H1 (cell line): ENCODE measurements at regions of chr1 and their contacts with region 1.

Region 1: DNA sequence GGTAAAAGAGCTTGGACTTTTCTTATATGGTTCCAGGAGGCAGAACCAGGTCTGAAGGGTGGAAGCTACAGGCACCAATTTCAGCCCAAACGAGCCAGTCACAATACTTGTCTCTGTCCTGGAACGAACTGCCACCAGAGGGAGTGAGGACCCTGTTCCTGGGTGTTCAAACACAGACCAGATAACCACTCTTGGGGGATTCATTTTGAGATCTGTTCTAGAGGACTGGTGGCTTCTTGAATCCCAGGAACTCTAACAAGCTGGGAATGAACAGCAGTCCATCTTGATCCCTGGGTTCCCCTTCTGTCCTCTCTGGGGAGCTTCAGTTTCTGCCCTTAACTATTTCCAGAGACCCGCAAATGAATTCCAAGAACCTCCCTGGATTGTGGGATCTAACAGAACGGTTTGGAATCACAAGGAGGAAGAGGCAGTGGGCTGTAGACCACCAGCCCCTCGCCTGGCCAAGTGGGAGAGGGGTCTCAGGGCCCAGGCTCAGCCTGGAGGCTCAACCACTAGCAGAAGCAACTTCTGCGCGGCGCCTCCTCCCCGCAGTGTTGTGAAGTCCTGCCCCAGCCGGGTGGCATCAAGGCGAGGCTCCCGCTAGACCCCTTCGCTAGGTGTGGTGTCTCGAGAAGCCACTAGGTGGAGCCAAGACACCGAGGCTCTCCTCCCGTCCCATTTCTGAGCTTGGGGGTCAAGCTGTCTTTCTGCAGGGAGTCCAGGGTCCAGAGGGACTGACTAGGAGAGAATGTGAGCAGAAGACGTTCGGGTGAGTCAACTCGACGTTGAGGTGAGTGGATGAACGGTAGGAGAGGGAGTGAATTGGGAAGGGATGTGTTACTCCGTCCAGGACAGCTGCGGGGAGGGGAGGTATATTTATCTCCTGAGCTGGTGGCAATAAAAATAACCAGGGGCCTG is 12.1 kb upstream of the NES start:
- DNase-seq: peak in 1 of 2 experiments; percentile 92
- H3K4me3 ChIP-seq: peak overlapping the region in 3 of 4 experiments; percentile 36 to 55 (median 52); a peak in 6 of 8 replicates
- H3K27ac ChIP-seq: no peak overlapping the region
- H3K4me1 ChIP-seq: peaks cover 20 to 47% (median 36%) of the 10 kb centered on the region in 4 experiments
- H3K27me3 ChIP-seq: peaks cover 0 to 7% (median 0%) of the 10 kb centered on the region in 4 experiments; a peak in 2 of 7 replicates
- CTCF ChIP-seq: peak; percentile 91 to 98 (median 97)
- EP300 ChIP-seq: no peak; a peak in 1 of 3 replicates
- POLR2A ChIP-seq: no peak
- RAD21 ChIP-seq: peak; percentile 99 to 100

Region 2: DNA sequence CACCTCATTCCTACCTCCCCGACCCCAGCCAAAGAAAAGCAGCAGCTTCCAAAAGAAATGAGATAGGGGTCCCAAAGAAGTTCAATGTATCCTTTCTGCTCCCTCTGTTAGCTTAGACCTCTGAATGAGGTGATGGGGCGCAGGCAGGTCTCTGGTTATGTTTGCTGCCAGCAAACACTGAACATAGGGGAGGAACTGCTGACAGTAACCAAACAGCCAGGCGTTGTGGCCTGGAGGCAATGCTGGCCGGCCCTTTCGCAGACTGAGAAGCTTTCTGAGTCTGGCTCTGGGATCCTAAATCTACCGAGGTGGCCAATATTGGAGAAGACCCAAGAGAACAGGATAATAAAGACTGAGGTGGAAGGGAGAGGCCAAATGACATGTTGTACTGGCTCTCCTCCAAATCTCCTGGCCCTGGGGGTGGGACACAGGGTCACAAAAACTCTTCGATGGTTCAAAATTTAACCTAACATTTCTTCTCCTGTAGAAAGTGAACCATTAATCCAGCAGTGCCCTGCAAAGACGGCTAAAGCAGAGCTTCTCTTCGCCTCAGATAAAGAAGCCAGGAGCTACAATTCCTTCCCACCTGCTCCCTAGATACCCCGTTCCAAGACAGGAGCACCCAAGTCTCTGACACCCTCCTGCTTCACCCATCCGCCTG is 688.1 kb before region 1 on chr1:
- CTCF ChIA-PET with region 1: no interaction called
- POLR2A ChIA-PET with region 1: no interaction called
- DNase-seq: no peak
- H3K4me3 ChIP-seq: no peak overlapping the region
- H3K27ac ChIP-seq: no peak overlapping the region
- H3K4me1 ChIP-seq: peaks cover 0 to 4% (median 0%) of the 10 kb centered on the region in 4 experiments; a peak in 2 of 7 replicates
- H3K27me3 ChIP-seq: no peaks in the 10 kb centered on the region
- CTCF ChIP-seq: no peak
- EP300 ChIP-seq: no peak
- POLR2A ChIP-seq: no peak
- RAD21 ChIP-seq: no peak

Region 3: GRCh38 chr1:156540791-156541383 is 148.4 kb before region 1 on chr1:
- CTCF ChIA-PET with region 1: no interaction called
- POLR2A ChIA-PET with region 1: no interaction called
- DNase-seq: no peak
- H3K4me3 ChIP-seq: no peak overlapping the region
- H3K27ac ChIP-seq: no peak overlapping the region
- H3K4me1 ChIP-seq: no peaks in the 10 kb centered on the region
- H3K27me3 ChIP-seq: no peaks in the 10 kb centered on the region
- CTCF ChIP-seq: no peak
- EP300 ChIP-seq: no peak
- POLR2A ChIP-seq: no peak
- RAD21 ChIP-seq: no peak

Region 4: GRCh38 chr1:156601122-156601830 is 88.0 kb before region 1 on chr1 and contains the start of gene GPATCH4:
- CTCF ChIA-PET with region 1: no interaction called
- POLR2A ChIA-PET with region 1: no interaction called
- DNase-seq: peak in 1 of 2 experiments; percentile 86
- H3K4me3 ChIP-seq: peak within 1 kb of the TSS; percentile 86 to 97 (median 91)
- H3K27ac ChIP-seq: peak within 1 kb of the TSS; percentile 73
- H3K4me1 ChIP-seq: peaks cover 0 to 8% (median 3%) of the 10 kb centered on the region in 4 experiments; a peak in 5 of 7 replicates
- H3K27me3 ChIP-seq: no peaks in the 10 kb centered on the region
- CTCF ChIP-seq: no peak
- EP300 ChIP-seq: no peak
- POLR2A ChIP-seq: peak; percentile 66 to 80; a peak in 2 of 3 replicates
- RAD21 ChIP-seq: no peak
- total RNA-seq, gene GPATCH4: 47.9 and 48.5 TPM in 2 replicates

Region 5: GRCh38 chr1:156625436-156626078 is 63.7 kb before region 1 on chr1:
- CTCF ChIA-PET with region 1: interaction called, 868 read pairs
- POLR2A ChIA-PET with region 1: interaction called, 6 read pairs
- DNase-seq: peak in 1 of 2 experiments; percentile 84
- H3K4me3 ChIP-seq: peak overlapping the region; percentile 44 to 71 (median 46)
- H3K27ac ChIP-seq: no peak overlapping the region
- H3K4me1 ChIP-seq: peaks cover 0 to 9% (median 2%) of the 10 kb centered on the region in 4 experiments; a peak in 5 of 7 replicates
- H3K27me3 ChIP-seq: peaks cover 31 to 50% (median 38%) of the 10 kb centered on the region in 4 experiments
- CTCF ChIP-seq: peak; percentile 69 to 84 (median 75)
- EP300 ChIP-seq: no peak
- POLR2A ChIP-seq: no peak
- RAD21 ChIP-seq: peak; percentile 77 to 81

Region 6: DNA sequence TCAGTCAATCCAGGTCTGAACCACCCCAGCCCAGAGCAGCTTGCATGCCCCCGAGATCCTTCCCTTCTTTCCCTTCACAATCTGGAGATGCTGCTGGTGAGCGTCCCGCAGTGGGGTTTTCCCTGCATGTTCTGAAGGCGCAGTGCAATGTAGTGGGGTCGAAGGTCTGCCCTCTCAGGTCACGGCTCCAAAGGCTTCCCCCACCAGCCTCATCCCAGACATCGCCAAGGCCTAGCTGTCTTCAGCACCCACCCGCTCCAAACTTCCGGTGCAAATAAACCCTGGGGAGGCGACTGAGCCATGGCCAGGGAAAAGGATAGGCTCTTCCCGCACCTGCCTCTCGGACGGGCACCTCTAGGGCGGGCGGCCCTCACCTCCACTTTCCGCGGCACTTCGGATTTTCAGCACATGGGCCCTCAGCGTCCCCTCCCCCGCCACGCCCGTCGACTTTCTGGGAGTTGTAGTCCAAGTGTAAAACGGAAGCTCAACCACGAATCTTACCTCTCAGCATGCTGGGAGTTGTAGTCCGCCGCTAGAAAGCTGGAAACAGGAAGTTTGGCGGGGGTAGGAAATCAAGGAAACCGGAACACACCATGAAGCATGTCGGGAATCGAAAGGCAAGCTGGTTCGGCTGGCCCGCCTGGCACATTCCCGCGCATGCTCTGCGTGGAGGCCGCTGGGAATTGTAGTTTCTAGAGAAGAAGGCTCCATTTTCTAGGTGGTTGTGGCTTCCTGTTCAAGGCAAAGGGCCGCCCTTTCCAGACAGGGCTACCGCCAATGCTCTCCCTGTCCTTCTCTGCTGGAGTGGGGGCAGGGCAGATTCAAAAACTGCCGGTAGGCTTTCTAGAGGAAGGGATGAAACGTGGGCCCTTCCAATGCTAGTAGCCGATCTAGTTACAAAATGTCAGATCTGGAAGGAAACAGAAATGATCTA is 51.7 kb after region 1 on chr1 and contains the start of gene MRPL24:
- CTCF ChIA-PET with region 1: interaction called, 4,284 read pairs
- POLR2A ChIA-PET with region 1: interaction called, 10 read pairs
- DNase-seq: peak; percentile 93 to 99
- H3K4me3 ChIP-seq: peak within 1 kb of the TSS; percentile 55 to 95 (median 84)
- H3K27ac ChIP-seq: peak within 1 kb of the TSS; percentile 72
- H3K4me1 ChIP-seq: peaks cover 3 to 16% (median 7%) of the 10 kb centered on the region in 4 experiments; a peak in 6 of 7 replicates
- H3K27me3 ChIP-seq: no peaks in the 10 kb centered on the region
- CTCF ChIP-seq: peak in 1 of 3 experiments; percentile 12; a peak in 1 of 4 replicates
- EP300 ChIP-seq: no peak
- POLR2A ChIP-seq: peak; percentile 58 to 88
- RAD21 ChIP-seq: 0 out of 4 replicates have a peak, but pooled peaks of 1 of the 2 experiments have one; percentile 19
- total RNA-seq, gene MRPL24: 34.4 and 35.2 TPM in 2 replicates

Region 7: GRCh38 chr1:156767101-156767878 is 78.0 kb after region 1 on chr1 and contains the start of gene PRCC:
- CTCF ChIA-PET with region 1: interaction called, 44 read pairs
- POLR2A ChIA-PET with region 1: interaction called, 7 read pairs
- DNase-seq: peak; percentile 94 to 98
- H3K4me3 ChIP-seq: peak within 1 kb of the TSS; percentile 67 to 97 (median 86)
- H3K27ac ChIP-seq: peak within 1 kb of the TSS; percentile 86
- H3K4me1 ChIP-seq: peaks cover 0 to 16% (median 6%) of the 10 kb centered on the region in 4 experiments; a peak in 5 of 7 replicates
- H3K27me3 ChIP-seq: no peaks in the 10 kb centered on the region
- CTCF ChIP-seq: 0 out of 4 replicates have a peak, but pooled peaks of 1 of the 3 experiments have one; percentile 1
- EP300 ChIP-seq: no peak
- POLR2A ChIP-seq: peak in 1 of 2 experiments; percentile 74; a peak in 2 of 3 replicates
- RAD21 ChIP-seq: no peak
- total RNA-seq, gene PRCC: 102 and 115 TPM in 2 replicates

Region 8: DNA sequence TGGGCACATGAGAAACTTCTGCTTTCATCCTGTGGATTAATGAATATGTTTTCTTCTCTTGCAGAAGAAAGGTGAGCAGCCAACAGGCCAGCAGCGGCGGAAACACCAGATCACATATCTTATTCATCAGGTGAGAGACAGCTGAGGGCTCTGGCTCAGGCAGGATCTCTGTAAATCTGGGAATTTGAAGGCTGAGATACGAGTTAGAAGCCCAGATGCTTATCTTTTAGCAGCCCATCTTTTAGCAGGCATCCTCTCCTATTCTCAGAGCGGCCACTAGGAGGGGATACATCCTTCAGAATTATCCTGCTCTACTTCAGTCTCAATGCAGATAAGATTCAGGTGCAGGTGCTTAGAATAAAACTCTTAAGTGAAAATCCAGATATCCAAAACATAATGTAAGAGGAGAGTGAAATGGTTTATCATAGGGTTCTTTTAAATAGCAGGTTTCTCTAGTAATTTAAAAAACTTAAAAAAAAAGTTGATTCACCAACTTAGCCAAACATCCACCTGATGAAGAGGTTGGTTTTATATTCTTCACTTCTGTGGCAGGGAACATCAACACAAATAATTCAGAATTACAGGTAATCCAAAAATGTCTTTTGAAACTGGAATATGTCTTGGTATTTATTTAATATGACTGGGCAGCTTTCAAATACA is 108.0 kb after region 1 on chr1:
- CTCF ChIA-PET with region 1: interaction called, 28 read pairs
- POLR2A ChIA-PET with region 1: no interaction called
- DNase-seq: no peak
- H3K4me3 ChIP-seq: no peak overlapping the region
- H3K27ac ChIP-seq: no peak overlapping the region
- H3K4me1 ChIP-seq: no peaks in the 10 kb centered on the region
- H3K27me3 ChIP-seq: no peaks in the 10 kb centered on the region
- CTCF ChIP-seq: peak in 2 of 3 experiments; percentile 84 to 85; a peak in 3 of 4 replicates
- EP300 ChIP-seq: no peak
- POLR2A ChIP-seq: no peak
- RAD21 ChIP-seq: peak; percentile 81 to 83

Region 9: GRCh38 chr1:156838981-156839410 is 149.7 kb after region 1 on chr1:
- CTCF ChIA-PET with region 1: interaction called, 29 read pairs
- POLR2A ChIA-PET with region 1: no interaction called
- DNase-seq: peak in 1 of 2 experiments; percentile 86
- H3K4me3 ChIP-seq: no peak overlapping the region
- H3K27ac ChIP-seq: no peak overlapping the region
- H3K4me1 ChIP-seq: peaks cover 0 to 2% (median 2%) of the 10 kb centered on the region in 4 experiments; a peak in 3 of 7 replicates
- H3K27me3 ChIP-seq: peaks cover 9 to 23% (median 22%) of the 10 kb centered on the region in 4 experiments
- CTCF ChIP-seq: peak; percentile 92 to 94 (median 93)
- EP300 ChIP-seq: no peak
- POLR2A ChIP-seq: no peak
- RAD21 ChIP-seq: peak; percentile 90 to 94

Region 10: GRCh38 chr1:156892190-156893047 is 203.1 kb after region 1 on chr1:
- CTCF ChIA-PET with region 1: interaction called, 158 read pairs
- POLR2A ChIA-PET with region 1: interaction called, 3 read pairs
- DNase-seq: peak; percentile 62 to 97
- H3K4me3 ChIP-seq: peak overlapping the region in 2 of 4 experiments; percentile 14 to 55; a peak in 4 of 8 replicates
- H3K27ac ChIP-seq: no peak overlapping the region
- H3K4me1 ChIP-seq: peaks cover 0 to 16% (median 9%) of the 10 kb centered on the region in 4 experiments; a peak in 5 of 7 replicates
- H3K27me3 ChIP-seq: peaks cover 8 to 54% (median 43%) of the 10 kb centered on the region in 4 experiments
- CTCF ChIP-seq: peak; percentile 84 to 93 (median 92)
- EP300 ChIP-seq: no peak
- POLR2A ChIP-seq: no peak
- RAD21 ChIP-seq: peak; percentile 45 to 63